Activated CD4-positive, alpha-beta T cell treated with anti-CD3 and anti-CD28 coated beads, Interleukin-2, amount 10 ng/mL, durations not matched to agents 24 days and 14 days (primary cell): ENCODE measurements at regions of chr21 and their contacts with region 1.

Region 1: GRCh38 chr21:44338971-44339910 is at the start of gene CFAP410:
- DNase-seq: peak; percentile 99
- H3K4me3 Mint-ChIP-seq: peak within 1 kb of the TSS; percentile 93
- H3K27ac Mint-ChIP-seq: peak within 1 kb of the TSS; percentile 92
- H3K4me1 Mint-ChIP-seq: peaks cover 13% of the 10 kb centered on the region
- H3K27me3 Mint-ChIP-seq: no peaks in the 10 kb centered on the region
- total RNA-seq, gene CFAP410: 15.1 and 18.5 TPM in 2 replicates

Region 2: GRCh38 chr21:42973991-42974831 is 1365.0 kb before region 1 on chr21 and contains the start of gene PKNOX1:
- intact Hi-C with region 1: loop called (anchors 5 kb)
- DNase-seq: peak; percentile 100
- H3K4me3 Mint-ChIP-seq: peak within 1 kb of the TSS; percentile 90
- H3K27ac Mint-ChIP-seq: peak within 1 kb of the TSS; percentile 94
- H3K4me1 Mint-ChIP-seq: peaks cover 26% of the 10 kb centered on the region
- H3K27me3 Mint-ChIP-seq: no peaks in the 10 kb centered on the region
- total RNA-seq, gene PKNOX1: 23.1 and 26.2 TPM in 2 replicates

Region 3: GRCh38 chr21:44299458-44300261 is 39.6 kb before region 1 on chr21 and contains the start of gene PFKL:
- intact Hi-C with region 1: loop called (anchors 5 kb)
- DNase-seq: peak; percentile 91
- H3K4me3 Mint-ChIP-seq: peak within 1 kb of the TSS; percentile 91
- H3K27ac Mint-ChIP-seq: peak within 1 kb of the TSS; percentile 98
- H3K4me1 Mint-ChIP-seq: peaks cover 37% of the 10 kb centered on the region
- H3K27me3 Mint-ChIP-seq: no peaks in the 10 kb centered on the region
- total RNA-seq, gene PFKL: 157 and 162 TPM in 2 replicates

Region 4: DNA sequence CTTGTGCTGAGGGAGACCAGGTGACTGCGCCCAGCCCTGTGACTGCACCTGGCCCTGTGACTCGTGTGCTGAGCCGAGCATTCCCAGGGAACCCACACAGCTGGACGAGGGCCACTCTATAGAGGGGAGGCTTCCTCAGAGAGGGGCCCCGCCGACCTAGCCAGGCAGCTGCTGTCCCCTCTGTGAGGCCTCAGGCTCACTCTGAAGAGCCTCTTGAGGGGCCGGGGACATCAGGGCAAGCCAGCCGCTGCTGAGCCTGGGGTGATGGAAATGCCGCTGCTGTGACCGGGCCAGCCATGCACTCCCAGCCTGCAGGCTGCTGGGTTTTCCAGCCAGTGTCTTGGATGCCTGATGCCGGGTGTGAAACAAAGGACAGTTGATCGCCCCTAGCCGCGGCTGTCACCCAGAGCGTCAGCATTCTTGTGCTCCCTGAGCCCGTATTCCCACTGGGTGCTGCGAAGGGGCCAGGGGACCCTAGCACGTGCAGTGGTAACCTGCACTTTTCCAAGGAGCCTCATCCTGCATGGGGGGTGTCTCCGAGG is 21.9 kb before region 1 on chr21:
- intact Hi-C with region 1: no loop called
- DNase-seq: no peak
- H3K4me3 Mint-ChIP-seq: no peak overlapping the region
- H3K27ac Mint-ChIP-seq: no peak overlapping the region
- H3K4me1 Mint-ChIP-seq: peaks cover 3% of the 10 kb centered on the region
- H3K27me3 Mint-ChIP-seq: no peaks in the 10 kb centered on the region

Region 5: GRCh38 chr21:44377201-44377921 is 38.1 kb after region 1 on chr21:
- intact Hi-C with region 1: no loop called
- DNase-seq: no peak
- H3K4me3 Mint-ChIP-seq: no peak overlapping the region
- H3K27ac Mint-ChIP-seq: no peak overlapping the region
- H3K4me1 Mint-ChIP-seq: peaks cover 24% of the 10 kb centered on the region
- H3K27me3 Mint-ChIP-seq: no peaks in the 10 kb centered on the region

Region 6: GRCh38 chr21:44454747-44455523 is 115.7 kb after region 1 on chr21 and contains the start of gene LRRC3:
- intact Hi-C with region 1: loop called (anchors 1 kb)
- DNase-seq: peak; percentile 92
- H3K4me3 Mint-ChIP-seq: peak within 1 kb of the TSS; percentile 81
- H3K27ac Mint-ChIP-seq: peak within 1 kb of the TSS; percentile 67
- H3K4me1 Mint-ChIP-seq: peaks cover 2% of the 10 kb centered on the region
- H3K27me3 Mint-ChIP-seq: peaks cover 24% of the 10 kb centered on the region
- total RNA-seq, gene LRRC3: 2.3 and 2.4 TPM in 2 replicates

Region 7: DNA sequence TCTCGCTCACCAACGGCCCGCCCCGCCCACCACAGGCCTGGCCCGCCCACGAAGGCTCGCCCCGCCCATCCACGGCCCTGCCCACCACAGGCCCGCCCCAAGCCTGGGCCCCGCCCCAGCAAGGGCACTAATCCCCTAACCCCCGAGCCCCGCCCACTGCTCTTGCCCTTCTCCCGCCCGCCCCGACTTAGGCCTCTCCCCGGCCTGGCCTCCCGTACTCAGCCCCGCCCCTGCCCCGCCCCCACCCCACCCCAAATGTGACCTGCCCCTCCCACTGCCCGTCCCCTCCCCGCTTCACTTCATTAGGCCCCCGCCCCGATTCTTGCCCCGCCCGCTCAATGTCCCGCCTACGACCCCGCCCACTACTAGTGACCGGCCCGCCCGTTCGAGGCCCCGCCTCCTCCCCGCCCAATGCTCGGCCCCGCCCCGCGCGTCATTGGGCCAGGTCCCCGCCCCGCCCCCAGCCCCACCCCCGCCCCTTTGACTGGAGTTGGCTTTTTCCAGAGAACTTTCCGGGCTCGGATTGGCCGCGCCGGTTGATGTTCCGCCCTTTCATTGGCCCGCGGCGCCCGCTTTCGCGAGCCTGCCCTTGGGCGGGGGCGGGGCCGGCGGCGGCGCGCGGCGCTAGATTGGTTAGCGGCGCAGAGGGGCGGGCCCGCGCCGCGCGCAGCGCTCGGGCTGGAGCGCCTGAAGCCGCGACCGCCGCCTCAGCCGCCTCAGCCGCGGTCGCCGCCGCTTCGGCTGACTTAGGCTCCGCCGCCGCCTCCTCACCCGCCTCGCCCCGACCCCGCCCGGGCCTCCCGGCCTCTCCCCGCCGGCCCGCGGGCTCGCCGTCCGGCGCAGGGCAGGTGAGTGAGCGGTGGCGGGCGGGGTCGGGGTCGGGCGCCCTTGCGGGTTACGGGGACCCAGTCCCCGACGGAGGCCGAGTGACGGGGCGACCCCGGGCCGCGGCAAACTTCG is 1304.1 kb after region 1 on chr21 and contains the start of gene PCBP3:
- intact Hi-C with region 1: loop called (anchors 5 kb)
- DNase-seq: peak; percentile 98
- H3K4me3 Mint-ChIP-seq: peak within 1 kb of the TSS; percentile 82
- H3K27ac Mint-ChIP-seq: peak within 1 kb of the TSS; percentile 64
- H3K4me1 Mint-ChIP-seq: peaks cover 16% of the 10 kb centered on the region
- H3K27me3 Mint-ChIP-seq: peaks cover 11% of the 10 kb centered on the region
- total RNA-seq, gene PCBP3: 7.5 and 9.7 TPM in 2 replicates

Region 8: DNA sequence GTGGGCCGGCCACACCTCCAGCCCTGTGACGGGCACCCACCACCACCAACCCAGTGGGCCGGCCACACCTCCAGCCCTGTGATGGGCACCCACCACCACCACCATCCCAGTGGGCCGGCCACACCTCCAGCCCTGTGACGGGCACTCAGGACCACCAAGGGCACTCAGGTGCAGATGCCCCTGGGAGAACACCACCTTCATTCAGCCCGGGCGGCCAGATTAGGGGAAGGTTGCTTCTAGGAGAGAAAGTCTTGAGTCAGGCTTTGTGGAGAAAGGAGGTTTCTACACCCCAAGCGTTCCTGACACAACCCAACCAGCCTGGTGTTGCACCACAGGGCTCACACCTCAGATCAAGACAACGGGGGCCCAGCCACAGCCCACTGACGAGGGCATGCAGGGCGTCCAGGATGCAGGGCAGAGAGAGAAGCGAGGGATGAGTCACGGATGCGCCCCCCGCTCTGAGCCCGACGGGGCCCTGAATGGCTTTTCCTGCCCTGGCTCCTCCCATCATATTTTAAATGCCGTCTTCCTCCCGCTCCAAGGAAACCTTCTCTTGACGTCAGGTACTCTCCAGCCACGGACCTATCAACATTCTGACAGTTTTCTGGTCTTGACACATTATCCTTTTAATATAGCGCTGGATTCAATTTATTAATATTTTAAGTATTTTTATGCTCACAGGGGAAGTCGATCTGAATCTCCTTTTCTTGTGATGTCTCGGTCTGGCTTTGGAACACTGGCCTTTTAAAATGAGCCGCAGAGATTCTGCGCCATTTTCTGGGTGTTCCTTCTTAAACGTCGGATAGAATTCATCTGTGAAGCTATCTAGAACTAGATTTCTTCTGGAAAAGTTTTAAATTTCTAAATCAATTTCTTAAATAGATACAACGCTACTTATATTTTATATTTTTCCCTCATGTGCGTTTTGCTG is 1845.6 kb after region 1 on chr21:
- intact Hi-C with region 1: loop called (anchors 5 kb)
- DNase-seq: peak; percentile 94
- H3K4me3 Mint-ChIP-seq: peak overlapping the region; percentile 91
- H3K27ac Mint-ChIP-seq: peak overlapping the region; percentile 89
- H3K4me1 Mint-ChIP-seq: peaks cover 7% of the 10 kb centered on the region
- H3K27me3 Mint-ChIP-seq: no peaks in the 10 kb centered on the region